ENCODE measurements at regions of chr20 and their contacts with region 1.

Region 1: DNA sequence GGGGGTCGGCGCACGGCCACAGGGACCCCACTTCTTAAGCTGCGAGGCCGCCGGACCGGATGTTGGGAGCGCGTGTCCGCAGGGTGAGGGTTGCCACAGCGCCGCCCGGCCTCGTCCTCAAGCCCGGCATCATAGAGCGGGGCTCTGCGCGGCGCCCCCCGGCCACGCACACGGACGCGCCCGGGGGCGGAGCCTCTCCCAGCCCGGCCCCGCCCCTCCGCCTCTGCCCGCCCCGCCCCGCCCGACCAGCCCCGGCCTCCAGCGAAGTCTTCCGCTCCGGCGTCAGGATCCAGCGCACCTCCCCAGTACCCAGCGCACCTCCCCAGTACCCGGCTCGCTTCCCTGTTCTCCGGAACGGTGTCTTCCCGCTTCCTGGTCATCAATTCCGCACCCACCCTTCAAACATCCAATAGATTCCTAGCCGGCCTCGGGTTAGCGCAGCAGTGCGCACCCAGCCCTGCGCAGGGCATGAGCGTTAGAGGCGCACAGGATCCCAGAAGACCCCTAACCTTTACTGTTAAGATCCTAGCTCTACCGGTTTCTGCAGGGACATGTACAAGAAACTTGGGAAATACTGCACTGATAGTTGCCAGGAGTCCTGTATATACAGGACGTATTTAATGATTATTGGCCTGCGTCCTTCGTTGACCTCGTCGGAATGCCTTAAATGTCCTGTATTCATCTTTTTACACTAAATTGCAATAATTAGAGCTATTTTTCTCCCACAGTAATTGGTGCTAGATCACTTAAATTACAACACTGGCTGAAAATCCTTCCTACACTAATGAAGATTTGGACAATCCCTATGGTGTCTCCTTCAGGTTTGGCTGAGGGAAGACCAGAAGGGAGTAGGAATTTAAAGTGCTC is 535 bp upstream of the DNAAF9 start:
- DNase-seq: peak; percentile 69
- H3K4me3 Mint-ChIP-seq: peak overlapping the region; percentile 89
- H3K27ac Mint-ChIP-seq: peak overlapping the region; percentile 83
- H3K4me1 Mint-ChIP-seq: peaks cover 33% of the 10 kb centered on the region
- H3K27me3 Mint-ChIP-seq: peaks cover 21% of the 10 kb centered on the region

Region 2: GRCh38 chr20:3330046-3330741 is 77.8 kb before region 1 on chr20:
- intact Hi-C with region 1: no loop called
- DNase-seq: no peak
- H3K4me3 Mint-ChIP-seq: no peak overlapping the region
- H3K27ac Mint-ChIP-seq: no peak overlapping the region
- H3K4me1 Mint-ChIP-seq: peaks cover 3% of the 10 kb centered on the region
- H3K27me3 Mint-ChIP-seq: no peaks in the 10 kb centered on the region

Region 3: GRCh38 chr20:3383878-3384495 is 24.0 kb before region 1 on chr20:
- intact Hi-C with region 1: loop called (anchors 1 kb)
- DNase-seq: no peak
- H3K4me3 Mint-ChIP-seq: no peak overlapping the region
- H3K27ac Mint-ChIP-seq: peak overlapping the region; percentile 66
- H3K4me1 Mint-ChIP-seq: peaks cover 12% of the 10 kb centered on the region
- H3K27me3 Mint-ChIP-seq: peaks cover 1% of the 10 kb centered on the region

Region 4: GRCh38 chr20:3420211-3420707 is 12.3 kb after region 1 on chr20:
- intact Hi-C with region 1: loop called (anchors 1 kb)
- DNase-seq: peak; percentile 62
- H3K4me3 Mint-ChIP-seq: no peak overlapping the region
- H3K27ac Mint-ChIP-seq: peak overlapping the region; percentile 71
- H3K4me1 Mint-ChIP-seq: peaks cover 9% of the 10 kb centered on the region
- H3K27me3 Mint-ChIP-seq: peaks cover 11% of the 10 kb centered on the region

Region 5: GRCh38 chr20:3470627-3471396 is 62.8 kb after region 1 on chr20 and contains the start of gene ATRN:
- intact Hi-C with region 1: loop called (anchors 2 kb)
- DNase-seq: peak; percentile 83
- H3K4me3 Mint-ChIP-seq: peak within 1 kb of the TSS; percentile 93
- H3K27ac Mint-ChIP-seq: peak within 1 kb of the TSS; percentile 25
- H3K4me1 Mint-ChIP-seq: peaks cover 29% of the 10 kb centered on the region
- H3K27me3 Mint-ChIP-seq: peaks cover 12% of the 10 kb centered on the region
- total RNA-seq, gene ATRN: 11.5 and 12.5 TPM in 2 replicates

Region 6: GRCh38 chr20:3632311-3633004 is 224.5 kb after region 1 on chr20:
- intact Hi-C with region 1: no loop called
- DNase-seq: no peak
- H3K4me3 Mint-ChIP-seq: no peak overlapping the region
- H3K27ac Mint-ChIP-seq: no peak overlapping the region
- H3K4me1 Mint-ChIP-seq: no peaks in the 10 kb centered on the region
- H3K27me3 Mint-ChIP-seq: no peaks in the 10 kb centered on the region

Region 7: DNA sequence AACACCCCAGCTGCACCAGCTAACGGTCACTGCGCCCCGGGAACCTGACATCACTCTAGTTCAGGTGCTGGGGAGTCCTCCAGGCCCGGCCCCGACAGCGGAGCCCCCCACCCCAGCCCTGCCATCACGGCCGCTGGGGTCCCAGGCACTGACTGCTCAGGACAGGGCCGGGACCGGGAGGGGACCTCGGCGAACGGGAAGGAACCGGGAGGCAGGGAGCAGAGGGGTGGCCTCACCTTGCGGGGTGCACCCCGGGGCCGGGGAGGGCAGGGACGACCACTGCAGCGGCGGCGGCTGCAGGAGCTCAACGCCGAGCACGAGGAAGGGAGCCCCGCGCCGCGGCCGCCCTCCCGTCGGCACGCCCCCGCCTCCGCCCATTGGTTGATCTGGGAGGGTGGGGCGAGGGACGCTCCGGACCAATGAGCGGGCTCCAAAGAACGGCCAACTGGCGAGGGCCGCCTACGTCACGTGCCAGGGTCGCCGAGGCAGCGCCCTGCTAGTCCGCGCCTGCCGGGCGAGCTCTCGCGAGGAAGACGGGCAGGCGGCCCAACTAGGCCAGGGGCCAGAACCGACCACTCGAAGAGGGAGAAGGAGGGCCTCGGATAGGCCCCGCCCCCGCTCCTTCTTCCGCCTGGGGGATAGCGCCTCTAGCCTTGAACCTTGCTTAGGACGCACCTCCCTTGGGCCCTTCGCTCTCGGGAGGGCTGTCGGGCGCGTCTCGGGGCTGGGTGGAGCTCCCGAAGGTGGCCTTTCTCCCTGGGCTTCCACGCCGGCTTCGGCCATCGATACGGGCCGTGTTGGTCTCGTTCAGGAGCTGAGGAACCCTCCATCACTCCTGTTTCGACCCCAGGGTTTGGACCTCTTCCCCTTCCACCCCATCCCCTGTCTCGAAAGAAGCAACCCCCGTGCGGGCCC is 359.7 kb after region 1 on chr20 and contains the start of gene ADISSP:
- intact Hi-C with region 1: loop called (anchors 5 kb)
- DNase-seq: peak; percentile 97
- H3K4me3 Mint-ChIP-seq: peak within 1 kb of the TSS; percentile 86
- H3K27ac Mint-ChIP-seq: peak within 1 kb of the TSS; percentile 94
- H3K4me1 Mint-ChIP-seq: peaks cover 21% of the 10 kb centered on the region
- H3K27me3 Mint-ChIP-seq: peaks cover 3% of the 10 kb centered on the region
- total RNA-seq, gene ADISSP: 55.8 and 56.3 TPM in 2 replicates